ENCODE measurements at regions of chr15 and their contacts with region 1.

Region 1: GRCh38 chr15:45457641-45458433 is 64.7 kb downstream of the SLC30A4 start:
- DNase-seq: peak; percentile 74
- H3K4me3 ChIP-seq: peak overlapping the region; percentile 50 to 67
- H3K27ac ChIP-seq: peak overlapping the region; percentile 76 to 94
- H3K4me1 ChIP-seq: peaks cover 10 to 21% of the 10 kb centered on the region in 2 experiments
- H3K27me3 ChIP-seq: no peaks in the 10 kb centered on the region
- CTCF ChIP-seq: peak; percentile 78
- EP300 ChIP-seq: no peak; a peak in 1 of 4 replicates
- RAD21 ChIP-seq: peak; percentile 92

Region 2: DNA sequence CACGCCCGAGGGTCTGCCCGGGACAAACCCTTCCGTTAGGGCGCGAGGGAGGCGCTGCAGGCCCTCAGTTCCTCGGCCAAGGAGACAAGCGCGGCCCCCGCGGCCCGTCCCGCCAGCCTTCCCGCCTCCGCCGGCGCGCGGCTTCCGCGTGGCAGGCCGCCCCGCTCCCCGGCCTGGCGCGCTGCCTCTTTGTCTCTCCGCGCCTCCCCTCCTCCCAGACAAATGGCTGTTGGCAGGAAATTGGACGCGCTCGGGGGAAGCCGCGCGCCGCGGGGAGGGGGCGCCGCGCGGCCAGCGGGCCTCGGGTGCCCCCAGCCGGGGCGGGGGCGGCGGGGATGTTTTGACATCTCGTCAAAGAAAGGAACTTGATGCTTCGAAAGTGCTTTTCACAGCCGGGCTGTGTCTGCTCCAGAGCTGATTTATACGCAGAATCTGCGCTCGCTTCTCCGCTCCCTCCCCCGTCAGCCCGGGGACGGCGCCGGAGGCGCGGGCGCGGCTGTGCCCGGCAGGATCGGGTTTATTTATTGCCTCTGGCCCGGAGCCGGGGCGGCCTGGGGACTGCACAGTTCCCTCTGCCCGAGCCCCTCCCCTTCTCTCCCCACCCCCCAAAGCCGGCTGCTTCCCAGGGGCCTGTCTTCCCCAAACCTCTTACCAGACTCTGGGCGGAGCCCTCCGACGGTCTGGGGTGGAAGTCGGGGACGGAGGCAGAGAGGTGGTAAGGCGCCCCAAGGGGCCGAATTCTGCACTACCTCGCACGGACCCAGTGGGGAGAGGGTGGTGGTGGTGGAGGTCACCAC is 290.8 kb before region 1 on chr15:
- CTCF ChIA-PET with region 1: interaction called, 51 read pairs
- POLR2A ChIA-PET with region 1: no interaction called
- DNase-seq: peak; percentile 83
- H3K4me3 ChIP-seq: peak overlapping the region; percentile 54 to 72
- H3K27ac ChIP-seq: peak overlapping the region; percentile 84 to 100
- H3K4me1 ChIP-seq: peaks cover 16 to 65% of the 10 kb centered on the region in 2 experiments
- H3K27me3 ChIP-seq: no peaks in the 10 kb centered on the region
- CTCF ChIP-seq: peak; percentile 62
- EP300 ChIP-seq: 0 out of 4 replicates have a peak, but pooled peaks have one; percentile 2 to 22
- RAD21 ChIP-seq: peak; percentile 17; the same call in 1 of the 2 replicates

Region 3: DNA sequence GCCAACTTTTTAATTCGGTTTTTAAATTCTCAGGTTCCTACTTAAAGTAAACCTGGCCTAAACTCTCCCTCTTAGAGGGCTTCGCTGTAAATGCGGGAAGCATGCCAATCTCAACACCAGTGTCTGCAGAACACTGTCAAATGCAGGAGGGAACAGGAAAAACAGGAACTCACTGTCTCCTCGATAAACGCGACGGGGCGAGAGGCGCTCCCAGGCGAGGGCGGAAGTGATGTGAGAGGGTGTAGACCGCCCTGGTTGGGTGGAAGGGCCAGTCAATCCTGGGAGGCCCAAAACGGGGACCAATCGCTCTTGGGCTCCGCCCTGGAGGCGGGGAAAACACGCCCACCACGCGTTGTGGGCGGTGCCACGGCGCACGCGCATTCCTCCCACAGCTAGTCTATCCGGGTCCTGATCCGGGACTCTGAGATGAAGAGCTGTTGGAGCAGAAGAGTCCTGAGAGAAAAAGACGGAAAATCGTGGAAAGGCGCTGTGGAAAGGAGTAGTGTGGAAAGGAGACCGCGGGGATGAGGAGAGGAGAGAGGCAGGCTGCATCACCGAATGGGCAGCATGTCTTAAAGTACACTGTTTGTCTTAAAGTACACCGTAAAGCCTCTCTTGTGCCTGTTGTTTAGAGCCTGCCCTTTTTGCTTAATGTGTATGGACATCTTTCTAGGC is 178.7 kb before region 1 on chr15:
- CTCF ChIA-PET with region 1: interaction called, 10 read pairs
- POLR2A ChIA-PET with region 1: no interaction called
- DNase-seq: peak; percentile 97
- H3K4me3 ChIP-seq: peak overlapping the region; percentile 53 to 88
- H3K27ac ChIP-seq: peak overlapping the region; percentile 58 to 88; a peak in 3 of 4 replicates
- H3K4me1 ChIP-seq: peaks cover 0 to 12% of the 10 kb centered on the region in 2 experiments; a peak in 2 of 4 replicates
- H3K27me3 ChIP-seq: no peaks in the 10 kb centered on the region
- CTCF ChIP-seq: no peak
- EP300 ChIP-seq: no peak
- RAD21 ChIP-seq: no peak

Region 4: GRCh38 chr15:45402162-45402954 is 55.5 kb before region 1 on chr15:
- CTCF ChIA-PET with region 1: interaction called, 26 read pairs
- POLR2A ChIA-PET with region 1: interaction called, 3 read pairs
- DNase-seq: peak; percentile 94
- H3K4me3 ChIP-seq: peak overlapping the region; percentile 95 to 98
- H3K27ac ChIP-seq: peak overlapping the region; percentile 84 to 93
- H3K4me1 ChIP-seq: peaks cover 5 to 8% of the 10 kb centered on the region in 2 experiments; a peak in 3 of 4 replicates
- H3K27me3 ChIP-seq: no peaks in the 10 kb centered on the region
- CTCF ChIP-seq: no peak; the same call in 1 of the 2 replicates
- EP300 ChIP-seq: no peak
- RAD21 ChIP-seq: no peak

Region 5: GRCh38 chr15:45476410-45476809 is 18.6 kb after region 1 on chr15:
- CTCF ChIA-PET with region 1: interaction called, 22 read pairs
- POLR2A ChIA-PET with region 1: no interaction called
- DNase-seq: no peak
- H3K4me3 ChIP-seq: no peak overlapping the region
- H3K27ac ChIP-seq: no peak overlapping the region
- H3K4me1 ChIP-seq: no peaks in the 10 kb centered on the region
- H3K27me3 ChIP-seq: no peaks in the 10 kb centered on the region
- CTCF ChIP-seq: no peak
- EP300 ChIP-seq: no peak
- RAD21 ChIP-seq: no peak

Region 6: GRCh38 chr15:45611305-45611704 is 153.5 kb after region 1 on chr15:
- CTCF ChIA-PET with region 1: interaction called, 131 read pairs
- POLR2A ChIA-PET with region 1: no interaction called
- DNase-seq: peak; percentile 32
- H3K4me3 ChIP-seq: no peak overlapping the region
- H3K27ac ChIP-seq: no peak overlapping the region
- H3K4me1 ChIP-seq: no peaks in the 10 kb centered on the region
- H3K27me3 ChIP-seq: no peaks in the 10 kb centered on the region
- CTCF ChIP-seq: peak; percentile 71
- EP300 ChIP-seq: no peak
- RAD21 ChIP-seq: peak; percentile 67

Measured in SK-N-SH (cell line).